B cell (primary cell): ENCODE measurements at regions of chr1 and their contacts with region 1.

Region 1: DNA sequence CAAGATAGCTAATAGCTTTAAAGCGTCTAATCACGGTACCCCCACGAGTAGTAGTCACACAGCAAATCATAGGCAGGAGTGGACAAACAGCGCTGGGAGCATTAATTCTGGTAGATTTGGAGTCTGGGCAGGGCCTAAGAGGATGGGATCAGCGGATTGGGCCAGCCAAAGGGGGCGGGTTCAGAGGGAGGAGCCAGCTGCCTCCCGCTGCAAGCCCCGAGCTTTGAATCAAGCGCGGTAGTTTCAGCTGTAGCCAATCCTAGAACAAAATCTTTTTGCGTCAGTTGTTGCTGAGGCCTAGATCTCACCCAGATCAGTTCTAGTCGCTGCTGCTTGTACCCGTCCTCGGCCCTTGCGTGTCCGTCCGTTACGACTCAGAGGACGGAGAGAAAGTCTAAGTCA is 576 bp upstream of the NASP start:
- DNase-seq: peak; percentile 98
- ATAC-seq: peak; percentile 75
- H3K4me3 ChIP-seq: peak overlapping the region; percentile 91 to 100 (median 97)
- H3K4me3 Mint-ChIP-seq: peak overlapping the region; percentile 99
- H3K27ac ChIP-seq: peak overlapping the region; percentile 80 to 82
- H3K27ac Mint-ChIP-seq: peak overlapping the region; percentile 97
- H3K4me1 ChIP-seq: peaks cover 40 to 49% of the 10 kb centered on the region in 2 donors
- H3K4me1 Mint-ChIP-seq: peaks cover 41% of the 10 kb centered on the region
- H3K27me3 ChIP-seq: no peaks in the 10 kb centered on the region
- H3K27me3 Mint-ChIP-seq: no peaks in the 10 kb centered on the region
- CTCF ChIP-seq: no peak

Region 2: DNA sequence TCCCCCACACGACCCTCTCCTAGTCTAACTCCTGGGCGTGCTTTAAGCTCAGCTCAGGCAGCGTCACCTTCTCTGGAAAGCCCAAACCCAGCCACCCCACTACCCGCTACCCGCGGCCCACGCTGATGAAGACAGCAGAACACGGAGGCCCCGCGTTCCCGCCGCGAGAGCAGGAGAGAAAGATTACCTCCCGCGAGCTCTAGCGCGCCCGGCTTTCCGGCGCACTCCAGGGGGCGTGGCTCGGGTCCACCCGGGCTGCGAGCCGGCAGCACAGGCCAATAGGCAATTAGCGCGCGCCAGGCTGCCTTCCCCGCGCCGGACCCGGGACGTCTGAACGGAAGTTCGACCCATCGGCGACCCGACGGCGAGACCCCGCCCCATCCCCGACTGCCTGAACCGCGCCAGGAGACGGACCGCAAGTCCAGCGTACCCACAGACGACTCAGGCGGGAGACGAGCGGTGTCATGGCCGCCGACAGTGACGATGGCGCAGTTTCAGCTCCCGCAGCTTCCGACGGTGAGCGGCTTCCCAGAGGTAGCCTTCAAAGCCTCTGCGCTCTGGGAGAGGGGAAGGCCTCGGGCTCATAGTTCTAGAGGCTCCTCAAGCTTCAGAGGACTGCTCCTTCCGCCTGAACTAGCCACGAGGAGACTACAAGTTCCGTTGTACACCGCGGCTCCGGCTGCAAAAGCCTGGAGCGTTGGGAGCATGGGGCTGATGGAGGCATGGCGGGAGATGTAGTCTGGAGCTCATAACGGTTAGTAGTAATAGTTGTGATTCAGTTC is 243.3 kb before region 1 on chr1 and contains the starts of genes MUTYH and TOE1:
- CTCF ChIA-PET with region 1: no interaction called
- POLR2A ChIA-PET with region 1: interaction called, 17 read pairs
- intact Hi-C with region 1: loop called (anchors 1 kb)
- DNase-seq: peak; percentile 92
- ATAC-seq: peak; percentile 88
- H3K4me3 ChIP-seq: peak within 1 kb of the TSS; percentile 83 to 97 (median 86)
- H3K4me3 Mint-ChIP-seq: peak within 1 kb of the TSS; percentile 91
- H3K27ac ChIP-seq: peak within 1 kb of the TSS; percentile 96
- H3K27ac Mint-ChIP-seq: peak within 1 kb of the TSS; percentile 100
- H3K4me1 ChIP-seq: peaks cover 20 to 33% of the 10 kb centered on the region in 2 donors
- H3K4me1 Mint-ChIP-seq: peaks cover 38% of the 10 kb centered on the region
- H3K27me3 ChIP-seq: no peaks in the 10 kb centered on the region
- H3K27me3 Mint-ChIP-seq: no peaks in the 10 kb centered on the region
- CTCF ChIP-seq: no peak
- total RNA-seq, gene MUTYH: 68.1 and 68.5 TPM in 2 replicates
- total RNA-seq, gene TOE1: 21.9 and 24.7 TPM in 2 replicates

Region 3: GRCh38 chr1:45512641-45513054 is 70.6 kb before region 1 on chr1:
- CTCF ChIA-PET with region 1: interaction called, 26 read pairs
- POLR2A ChIA-PET with region 1: interaction called, 6 read pairs
- intact Hi-C with region 1: no loop called
- DNase-seq: peak; percentile 76
- ATAC-seq: peak; percentile 66
- H3K4me3 ChIP-seq: no peak overlapping the region
- H3K4me3 Mint-ChIP-seq: no peak overlapping the region
- H3K27ac ChIP-seq: no peak overlapping the region
- H3K27ac Mint-ChIP-seq: peak overlapping the region; percentile 76
- H3K4me1 ChIP-seq: no peaks in the 10 kb centered on the region
- H3K4me1 Mint-ChIP-seq: peaks cover 8% of the 10 kb centered on the region
- H3K27me3 ChIP-seq: no peaks in the 10 kb centered on the region
- H3K27me3 Mint-ChIP-seq: no peaks in the 10 kb centered on the region
- CTCF ChIP-seq: peak; percentile 89

Region 4: DNA sequence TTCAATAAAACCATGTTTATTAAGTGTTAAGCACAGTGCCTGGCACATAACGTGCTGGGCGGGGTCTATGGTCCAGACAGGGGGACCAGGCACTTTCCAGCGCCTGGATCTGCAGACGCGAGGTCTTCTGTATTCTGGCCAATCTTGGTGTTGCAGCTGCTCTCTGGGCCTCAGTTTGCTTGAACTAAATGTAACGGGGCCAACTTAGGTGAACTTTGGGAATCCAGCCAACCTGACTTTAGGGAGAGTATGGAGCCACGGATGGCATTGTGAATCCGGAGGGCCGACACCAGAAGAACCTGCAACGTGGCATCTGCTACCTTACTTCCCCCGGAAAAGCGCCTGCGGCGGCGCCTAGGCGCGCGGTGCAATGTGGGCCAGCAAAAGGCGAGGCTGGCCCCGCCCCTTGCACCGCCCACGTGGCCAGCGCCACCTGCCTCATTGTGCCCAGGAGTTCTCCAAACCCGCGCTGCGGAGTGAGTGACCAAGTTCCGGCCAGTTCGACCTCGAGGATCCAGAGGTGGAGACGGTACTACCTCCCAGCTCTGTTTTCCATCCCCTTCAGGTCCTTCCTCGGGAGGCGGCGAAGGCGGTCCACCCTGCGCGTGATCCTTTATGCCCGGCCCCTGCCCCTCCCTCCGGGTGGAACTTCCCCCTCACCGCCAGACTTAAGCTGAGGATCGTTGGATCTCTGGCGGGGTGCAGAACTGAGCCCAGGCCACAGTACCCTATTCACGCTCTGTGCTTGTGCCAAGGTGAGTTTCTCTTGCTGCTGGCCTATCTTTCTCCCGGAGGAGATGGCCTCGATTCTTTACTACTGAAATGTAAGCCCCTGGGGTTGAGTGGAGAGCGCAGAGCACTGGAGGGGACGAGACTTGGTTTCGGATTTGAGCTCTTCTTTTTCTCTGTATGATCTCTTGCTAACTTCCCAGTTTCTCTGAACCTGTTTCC is 32.6 kb before region 1 on chr1 and contains the start of gene AKR1A1:
- CTCF ChIA-PET with region 1: interaction called, 7 read pairs
- POLR2A ChIA-PET with region 1: interaction called, 8 read pairs
- intact Hi-C with region 1: loop called (anchors 1 kb)
- DNase-seq: peak; percentile 96
- ATAC-seq: peak; percentile 93
- H3K4me3 ChIP-seq: peak within 1 kb of the TSS; percentile 65 to 100 (median 90)
- H3K4me3 Mint-ChIP-seq: peak within 1 kb of the TSS; percentile 97
- H3K27ac ChIP-seq: peak within 1 kb of the TSS; percentile 84 to 96
- H3K27ac Mint-ChIP-seq: peak within 1 kb of the TSS; percentile 96
- H3K4me1 ChIP-seq: peaks cover 23 to 28% of the 10 kb centered on the region in 2 donors
- H3K4me1 Mint-ChIP-seq: peaks cover 30% of the 10 kb centered on the region
- H3K27me3 ChIP-seq: no peaks in the 10 kb centered on the region
- H3K27me3 Mint-ChIP-seq: no peaks in the 10 kb centered on the region
- CTCF ChIP-seq: no peak
- total RNA-seq, gene AKR1A1: 101 and 145 TPM in 2 replicates

Region 5: GRCh38 chr1:45686317-45687013 is 103.2 kb after region 1 on chr1 and contains the start of gene GPBP1L1:
- CTCF ChIA-PET with region 1: interaction called, 3 read pairs
- POLR2A ChIA-PET with region 1: interaction called, 11 read pairs
- intact Hi-C with region 1: loop called (anchors 1 kb)
- DNase-seq: peak; percentile 99
- ATAC-seq: peak; percentile 72
- H3K4me3 ChIP-seq: peak within 1 kb of the TSS; percentile 65 to 99 (median 96)
- H3K4me3 Mint-ChIP-seq: peak within 1 kb of the TSS; percentile 100
- H3K27ac ChIP-seq: peak within 1 kb of the TSS; percentile 98
- H3K27ac Mint-ChIP-seq: peak within 1 kb of the TSS; percentile 100
- H3K4me1 ChIP-seq: peaks cover 23 to 30% of the 10 kb centered on the region in 2 donors
- H3K4me1 Mint-ChIP-seq: peaks cover 54% of the 10 kb centered on the region
- H3K27me3 ChIP-seq: no peaks in the 10 kb centered on the region
- H3K27me3 Mint-ChIP-seq: no peaks in the 10 kb centered on the region
- CTCF ChIP-seq: no peak
- total RNA-seq, gene GPBP1L1: 137 and 167 TPM in 2 replicates